ENCODE measurements at regions of chr2 and their contacts with region 1.

Region 1: DNA sequence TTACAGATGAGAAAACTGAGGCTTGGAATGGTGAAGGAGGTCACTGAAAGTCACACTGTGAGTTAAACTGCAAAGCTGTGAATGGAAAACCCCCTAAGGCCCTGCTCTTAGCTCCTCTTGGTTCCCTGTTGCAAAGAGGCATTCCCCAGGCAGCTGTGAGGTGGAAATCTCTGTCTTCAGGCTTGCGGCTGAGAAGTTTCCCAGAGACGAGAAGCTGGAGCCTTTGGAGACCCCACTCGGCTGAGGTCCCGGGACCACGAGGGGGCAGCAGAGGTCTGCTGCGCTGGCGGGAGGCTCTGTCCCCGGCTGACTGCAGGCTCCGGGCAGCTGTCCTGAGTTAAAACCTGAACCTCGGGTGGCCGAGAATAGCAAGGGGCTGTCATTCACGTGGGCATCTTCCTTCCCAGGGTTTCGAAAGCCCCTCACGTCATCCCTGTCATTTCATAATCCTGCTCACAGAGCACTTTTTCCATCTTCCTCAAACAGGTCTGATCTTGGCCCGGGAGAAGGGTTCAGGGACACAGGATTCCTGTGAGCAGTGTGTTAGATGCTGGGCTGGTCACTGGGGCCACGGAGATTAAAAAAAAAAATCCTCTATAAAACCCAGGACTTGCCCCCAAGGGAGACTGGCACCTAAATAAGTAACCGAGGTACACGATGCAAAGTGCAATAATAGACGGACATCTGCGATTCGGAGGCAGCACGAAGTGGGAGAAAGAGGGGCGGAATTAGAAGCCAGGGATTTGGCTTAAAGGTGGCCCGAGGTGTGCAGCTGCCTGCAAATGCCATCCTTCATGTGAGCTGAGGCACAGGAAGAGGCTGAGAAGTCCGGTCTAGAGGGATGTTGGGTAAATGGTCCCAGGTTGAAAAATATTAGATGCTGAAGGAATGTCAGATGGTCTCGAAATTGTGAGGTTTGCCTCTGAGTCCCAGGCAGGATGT is 24.6 kb upstream of the ATOH8 start:
- DNase-seq: no peak
- ATAC-seq: peak; percentile 98
- H3K4me3 ChIP-seq: no peak overlapping the region
- H3K27ac ChIP-seq: no peak overlapping the region
- H3K4me1 ChIP-seq: no peaks in the 10 kb centered on the region; the same call in 1 of the 2 replicates
- H3K27me3 ChIP-seq: no peaks in the 10 kb centered on the region
- CTCF ChIP-seq: peak; percentile 96 to 99 (median 99); a peak in 5 of 6 replicates
- EP300 ChIP-seq: no peak
- POLR2A ChIP-seq: no peak
- RAD21 ChIP-seq: peak; percentile 94

Region 2: DNA sequence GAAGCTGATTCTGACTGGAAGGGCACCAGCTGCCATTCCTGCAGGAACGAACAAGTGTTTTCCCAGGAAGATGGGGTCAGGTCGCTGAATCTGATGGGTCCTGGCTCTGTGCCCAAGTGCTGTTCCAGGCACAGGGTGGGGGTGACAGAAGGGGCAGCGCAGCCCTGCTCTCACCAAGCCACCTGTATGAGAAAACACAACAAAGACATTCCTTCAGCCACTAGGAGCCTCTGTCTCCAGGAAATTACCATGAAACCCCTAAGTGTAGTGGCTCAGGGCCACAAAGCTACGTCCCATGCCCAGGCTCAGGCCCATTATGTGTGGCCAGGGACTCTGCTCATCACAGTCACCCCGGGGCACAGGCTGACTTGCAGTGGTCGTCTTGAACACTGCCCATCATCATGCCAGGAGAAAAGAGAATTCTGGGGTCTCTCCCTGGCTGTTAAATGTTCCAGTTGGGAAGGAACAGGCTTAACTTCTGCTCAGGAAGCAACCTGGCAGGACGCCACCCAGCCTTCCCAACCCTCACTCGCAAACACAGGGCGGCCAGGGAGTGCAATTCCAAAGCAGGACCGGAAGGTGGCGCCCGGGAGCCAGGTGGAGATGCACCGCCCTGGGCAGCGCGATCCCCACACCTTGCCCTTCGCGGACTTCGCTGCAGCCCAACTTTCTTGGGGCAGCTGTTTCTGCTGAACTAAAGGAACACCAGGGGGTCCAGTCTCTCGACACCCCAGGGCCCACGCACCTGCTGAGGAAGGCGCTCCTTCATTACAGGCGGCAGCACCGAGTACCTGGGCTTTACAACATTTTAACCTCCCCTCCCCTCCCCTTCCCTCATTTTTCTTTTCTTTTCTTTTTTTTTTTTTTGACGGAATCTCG is 50.1 kb before region 1 on chr2:
- CTCF ChIA-PET with region 1: interaction called, 14 read pairs
- POLR2A ChIA-PET with region 1: no interaction called
- RAD21 ChIA-PET with region 1: interaction called, 6 read pairs
- SMC1A ChIA-PET with region 1: interaction called, 8 read pairs
- in situ Hi-C with region 1: no loop called
- intact Hi-C with region 1: loop called (anchors 5 kb)
- DNase-seq: no peak
- ATAC-seq: peak; percentile 99
- H3K4me3 ChIP-seq: no peak overlapping the region
- H3K27ac ChIP-seq: no peak overlapping the region
- H3K4me1 ChIP-seq: no peaks in the 10 kb centered on the region
- H3K27me3 ChIP-seq: no peaks in the 10 kb centered on the region
- CTCF ChIP-seq: peak; percentile 96 to 99 (median 99)
- EP300 ChIP-seq: no peak
- POLR2A ChIP-seq: no peak
- RAD21 ChIP-seq: peak; percentile 89

Region 3: GRCh38 chr2:85712849-85713602 is 16.1 kb before region 1 on chr2:
- CTCF ChIA-PET with region 1: interaction called, 64 read pairs
- POLR2A ChIA-PET with region 1: interaction called, 4 read pairs
- RAD21 ChIA-PET with region 1: interaction called, 11 read pairs
- SMC1A ChIA-PET with region 1: interaction called, 15 read pairs
- in situ Hi-C with region 1: no loop called
- intact Hi-C with region 1: no loop called
- DNase-seq: no peak
- ATAC-seq: no peak
- H3K4me3 ChIP-seq: no peak overlapping the region
- H3K27ac ChIP-seq: no peak overlapping the region
- H3K4me1 ChIP-seq: no peaks in the 10 kb centered on the region
- H3K27me3 ChIP-seq: no peaks in the 10 kb centered on the region; a peak in 1 of 4 replicates
- CTCF ChIP-seq: no peak
- EP300 ChIP-seq: no peak
- POLR2A ChIP-seq: no peak
- RAD21 ChIP-seq: no peak

Region 4: DNA sequence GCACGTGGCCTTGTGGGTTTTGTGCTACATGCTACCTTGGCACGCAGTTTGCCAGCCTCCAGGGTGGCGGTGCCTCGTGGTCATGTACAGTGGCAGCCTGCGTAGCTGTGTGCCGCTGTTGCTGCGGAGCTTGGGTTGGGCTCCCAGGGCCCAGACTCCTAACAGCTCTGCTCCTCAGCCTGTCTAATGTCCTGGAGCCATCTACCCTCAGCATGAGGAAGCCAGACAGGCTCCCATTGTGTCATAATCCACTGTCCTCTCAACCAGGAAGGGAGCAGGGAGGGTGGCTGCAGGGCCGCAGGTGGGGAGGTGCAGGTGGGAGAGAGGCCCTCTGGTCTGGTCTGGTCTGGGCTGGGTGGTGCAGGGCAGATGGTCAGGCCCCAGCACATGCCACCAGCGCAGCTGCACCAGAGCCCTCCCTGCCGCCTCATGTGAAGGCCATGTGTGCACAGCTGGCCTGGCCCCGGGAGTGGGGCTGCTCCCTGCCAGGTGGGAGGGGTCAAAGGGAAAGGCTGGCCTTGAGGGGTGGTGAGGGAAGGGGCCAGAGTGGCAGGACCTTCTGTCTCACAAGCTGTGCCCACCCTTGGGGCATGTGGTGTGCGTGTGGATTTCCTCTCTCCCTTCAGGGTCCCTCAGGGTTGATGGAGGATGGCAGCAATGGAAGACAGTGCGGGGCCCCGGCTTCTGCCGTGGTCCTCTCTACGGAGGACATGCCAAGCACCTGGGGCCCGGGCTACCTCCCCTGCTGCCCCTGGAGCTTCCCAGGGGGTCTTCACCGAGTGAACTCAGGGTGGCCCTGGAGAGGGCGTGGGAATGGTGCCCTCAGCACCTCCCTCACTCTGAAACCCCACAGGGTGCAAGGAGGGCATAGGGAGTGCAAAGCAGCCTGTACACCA is 29.5 kb after region 1 on chr2:
- CTCF ChIA-PET with region 1: interaction called, 11 read pairs
- POLR2A ChIA-PET with region 1: no interaction called
- RAD21 ChIA-PET with region 1: interaction called, 5 read pairs
- SMC1A ChIA-PET with region 1: interaction called, 5 read pairs
- in situ Hi-C with region 1: no loop called
- intact Hi-C with region 1: no loop called
- DNase-seq: no peak
- ATAC-seq: no peak
- H3K4me3 ChIP-seq: no peak overlapping the region
- H3K27ac ChIP-seq: no peak overlapping the region
- H3K4me1 ChIP-seq: no peaks in the 10 kb centered on the region; the same call in 1 of the 2 replicates
- H3K27me3 ChIP-seq: peaks cover 7 to 10% of the 10 kb centered on the region in 2 experiments
- CTCF ChIP-seq: no peak
- EP300 ChIP-seq: no peak
- POLR2A ChIP-seq: no peak
- RAD21 ChIP-seq: no peak

Region 5: DNA sequence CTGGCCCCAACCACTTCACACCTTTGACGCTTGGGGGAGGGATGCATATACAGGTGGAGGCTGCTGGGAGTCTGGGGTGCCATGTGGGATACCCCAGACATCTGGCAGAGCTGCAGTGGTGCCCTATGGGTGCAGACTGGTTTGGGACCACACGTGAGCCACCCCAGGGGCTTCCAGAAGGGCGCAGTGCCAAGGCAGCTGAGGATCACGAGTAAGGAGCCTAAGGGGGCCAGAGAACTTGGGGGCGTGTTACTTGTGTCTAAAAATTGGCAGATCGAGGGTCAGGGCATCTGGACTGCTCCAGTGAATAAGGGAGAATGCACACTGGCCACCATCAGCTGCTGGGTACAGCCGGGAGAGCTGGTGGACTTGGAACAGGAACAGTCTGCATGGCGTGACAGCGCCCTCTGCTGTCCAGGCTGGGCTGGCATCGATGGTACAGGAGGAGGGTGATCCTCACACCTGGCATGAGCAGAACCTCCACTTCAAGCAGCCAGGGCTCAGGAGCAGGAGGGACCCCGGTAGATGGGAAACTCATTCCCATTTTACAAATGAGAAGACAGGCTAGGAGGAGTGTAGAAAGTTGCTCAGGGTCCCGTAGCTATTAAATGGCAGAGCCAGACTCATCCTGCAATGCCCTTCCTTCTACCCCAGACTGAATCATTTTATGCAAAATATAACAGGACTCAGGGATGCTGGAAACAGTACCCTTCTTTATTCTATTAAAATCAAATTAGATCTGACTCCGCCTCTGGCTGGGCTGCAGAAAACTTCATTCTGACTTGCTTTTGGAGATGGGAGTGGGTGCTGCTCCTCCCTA is 85.0 kb after region 1 on chr2:
- CTCF ChIA-PET with region 1: interaction called, 234 read pairs
- POLR2A ChIA-PET with region 1: interaction called, 4 read pairs
- RAD21 ChIA-PET with region 1: interaction called, 116 read pairs
- SMC1A ChIA-PET with region 1: interaction called, 106 read pairs
- in situ Hi-C with region 1: loop called (anchors 10 kb)
- intact Hi-C with region 1: loop called (anchors 1 kb)
- DNase-seq: peak; percentile 30
- ATAC-seq: peak; percentile 99
- H3K4me3 ChIP-seq: no peak overlapping the region
- H3K27ac ChIP-seq: no peak overlapping the region
- H3K4me1 ChIP-seq: no peaks in the 10 kb centered on the region
- H3K27me3 ChIP-seq: no peaks in the 10 kb centered on the region
- CTCF ChIP-seq: peak; percentile 94 to 98 (median 95); a peak in 5 of 6 replicates
- EP300 ChIP-seq: no peak
- POLR2A ChIP-seq: no peak
- RAD21 ChIP-seq: peak; percentile 94